BJ (cell line): ENCODE measurements at regions of chr16 and their contacts with region 1.

Region 1: DNA sequence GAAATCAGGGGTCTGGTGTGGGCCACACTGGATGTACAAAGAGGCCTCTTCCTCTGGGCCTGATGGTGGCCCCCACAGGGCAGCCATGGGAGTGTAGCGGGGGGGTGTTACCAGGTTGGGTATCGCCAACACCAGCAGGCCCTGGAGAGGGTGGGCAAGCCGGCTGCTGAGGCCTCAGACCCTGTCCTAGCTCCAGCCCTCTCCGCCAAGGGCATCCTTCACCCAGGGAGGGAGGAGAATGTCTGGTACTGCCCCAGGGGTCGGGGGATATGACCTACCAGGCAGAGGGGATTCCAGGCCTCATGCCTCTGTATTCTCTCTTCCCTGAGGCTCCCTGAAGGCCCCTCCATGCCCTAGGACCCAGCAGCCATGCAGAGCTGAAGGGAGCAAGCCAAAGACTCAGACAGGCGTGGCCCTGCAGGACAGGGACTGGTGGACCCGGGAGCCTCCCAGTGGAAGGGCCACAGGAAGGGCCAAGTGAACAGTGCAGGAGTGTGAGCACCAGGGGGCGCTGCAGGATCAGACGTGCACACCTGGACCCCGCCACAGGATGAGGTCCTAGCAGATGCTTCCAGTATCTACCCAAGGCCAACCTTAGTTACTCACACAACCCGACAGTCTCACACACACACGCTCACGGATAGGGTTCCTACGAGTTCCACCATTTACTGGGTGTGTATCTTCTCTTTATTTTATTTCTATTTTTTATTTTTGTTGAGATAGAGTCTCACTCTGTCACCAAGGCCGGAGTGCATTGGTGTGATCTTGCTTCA is 10.9 kb upstream of the CES4A start:
- DNase-seq: no peak
- H3K4me3 ChIP-seq: no peak overlapping the region
- H3K27me3 ChIP-seq: no peaks in the 10 kb centered on the region
- CTCF ChIP-seq: peak; percentile 92

Region 2: DNA sequence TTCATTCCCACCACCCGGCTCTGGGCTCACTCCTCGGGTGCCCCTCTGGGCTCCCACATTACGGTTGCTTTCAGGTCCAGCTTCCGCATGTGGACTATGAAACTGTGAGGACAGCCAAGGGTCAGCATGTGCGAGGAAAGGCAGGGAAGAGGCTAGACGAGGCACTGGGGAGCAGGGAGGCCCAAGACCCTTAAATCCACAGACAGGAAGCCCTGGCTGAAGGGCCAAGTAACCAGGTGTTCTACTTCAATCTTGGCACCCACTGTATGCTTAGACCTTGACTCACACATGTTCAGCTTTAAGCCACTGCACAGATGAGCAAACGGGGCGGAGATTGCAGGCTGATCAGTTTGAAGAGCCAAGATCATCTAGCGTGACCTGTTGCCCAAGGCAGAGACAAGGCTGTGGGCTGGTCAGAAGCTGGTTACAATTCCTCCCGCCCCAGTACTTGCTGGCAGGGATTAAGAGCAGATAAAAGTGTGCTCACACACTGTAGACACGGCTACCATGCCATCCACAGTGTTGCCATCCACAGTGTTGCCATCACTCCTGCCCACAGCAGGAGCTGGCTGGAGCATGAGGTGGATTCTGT is 10.8 kb after region 1 on chr16 and contains the start of gene CES4A:
- CTCF ChIA-PET with region 1: interaction called, 26 read pairs
- POLR2A ChIA-PET with region 1: no interaction called
- DNase-seq: no peak
- H3K4me3 ChIP-seq: no peak within 1 kb of the TSS
- H3K27me3 ChIP-seq: no peaks in the 10 kb centered on the region
- CTCF ChIP-seq: no peak
- polyA plus RNA-seq, gene CES4A: 3.6 and 4.5 TPM in 2 replicates

Region 3: GRCh38 chr16:67022531-67023214 is 45.1 kb after region 1 on chr16:
- CTCF ChIA-PET with region 1: no interaction called
- POLR2A ChIA-PET with region 1: no interaction called
- DNase-seq: no peak
- H3K4me3 ChIP-seq: no peak overlapping the region
- H3K27me3 ChIP-seq: no peaks in the 10 kb centered on the region
- CTCF ChIP-seq: no peak

Region 4: DNA sequence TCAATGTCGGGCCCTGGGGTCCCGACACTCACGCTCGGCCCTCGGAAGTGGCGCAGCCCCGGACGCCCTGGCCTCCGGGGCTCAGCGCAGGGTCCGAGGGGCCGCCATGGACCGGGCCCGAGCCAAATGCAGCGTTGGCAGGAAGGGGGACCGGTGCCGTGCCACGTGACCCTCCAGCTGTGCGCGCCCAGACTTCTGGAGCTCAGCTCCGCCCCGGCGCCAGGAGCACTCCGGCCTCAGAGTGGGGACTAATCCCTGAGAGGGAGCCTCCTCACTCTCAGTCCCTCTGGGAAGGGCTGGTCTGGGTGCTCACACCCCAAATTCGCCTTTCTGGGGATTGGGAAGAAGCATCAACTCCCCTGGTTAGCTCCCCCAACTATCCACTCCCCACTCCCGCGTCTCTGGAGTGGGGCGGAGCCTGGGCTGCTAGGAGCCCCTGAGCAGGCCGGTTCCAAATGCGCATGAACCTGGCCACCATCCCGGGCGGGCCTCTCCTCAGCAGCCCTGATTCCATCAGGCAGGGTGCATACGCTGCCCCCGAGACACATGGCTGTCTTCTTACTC is 173.4 kb after region 1 on chr16 and contains the start of gene B3GNT9:
- CTCF ChIA-PET with region 1: interaction called, 55 read pairs
- POLR2A ChIA-PET with region 1: no interaction called
- DNase-seq: no peak
- H3K4me3 ChIP-seq: peak within 1 kb of the TSS; percentile 83
- H3K27me3 ChIP-seq: no peaks in the 10 kb centered on the region
- CTCF ChIP-seq: no peak
- polyA plus RNA-seq, gene B3GNT9: 25.7 and 34.9 TPM in 2 replicates

Region 5: DNA sequence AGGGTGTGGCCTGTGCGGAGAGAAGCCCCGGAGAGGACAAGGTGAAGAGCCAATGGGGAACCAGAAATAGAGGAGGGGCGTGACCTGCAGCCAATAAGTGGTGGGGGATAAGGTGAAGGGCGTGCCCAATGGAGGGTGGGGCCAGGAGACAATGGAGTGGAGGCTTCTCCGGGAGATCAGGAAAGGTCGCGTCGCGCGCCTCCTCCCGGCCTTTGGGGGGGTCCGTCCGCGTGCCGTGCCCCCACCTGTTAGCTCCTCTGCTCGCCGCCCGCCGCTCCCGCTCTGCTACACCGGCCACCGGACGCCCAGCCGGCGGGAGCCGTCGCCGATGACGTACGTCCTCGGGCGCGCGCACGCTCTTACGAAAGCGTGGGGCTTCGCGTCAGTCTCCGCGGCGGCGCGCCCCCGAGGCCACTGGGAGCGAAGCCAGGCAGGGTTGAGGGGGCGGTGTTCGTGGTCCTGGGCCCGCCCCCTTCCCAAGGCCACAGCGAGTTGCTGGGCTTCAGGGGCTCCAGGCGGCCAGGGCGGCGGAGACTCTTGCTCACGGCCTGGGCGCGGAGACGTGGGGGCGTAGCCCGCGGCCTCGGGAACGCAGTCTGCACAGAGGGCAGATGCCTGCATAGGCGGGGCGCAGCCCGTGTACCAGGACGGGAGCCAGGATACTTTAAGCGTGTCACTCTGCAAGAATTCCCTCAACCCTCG is 206.3 kb after region 1 on chr16 and contains the start of gene MATCAP1:
- CTCF ChIA-PET with region 1: interaction called, 26 read pairs
- POLR2A ChIA-PET with region 1: no interaction called
- DNase-seq: peak; percentile 83
- H3K4me3 ChIP-seq: peak within 1 kb of the TSS; percentile 60
- H3K27me3 ChIP-seq: no peaks in the 10 kb centered on the region
- CTCF ChIP-seq: no peak
- polyA plus RNA-seq, gene MATCAP1: 8.7 and 13.1 TPM in 2 replicates